Activated T-helper 2 cell treated with anti-CD3 and anti-CD28 coated beads, Interferon-gamma antibody, Interleukin-2, Interleukin-4, amounts not matched to agents 10 μg/mL and 5 μg/mL and 100 μg/mL, durations not matched to agents 14 hours and 24 hours and 36 hours (primary cell): ENCODE measurements at regions of chr11 and their contacts with region 1.

Region 1: GRCh38 chr11:116276051-116277044 is 496.4 kb downstream of the BUD13 start:
- DNase-seq: peak; percentile 69
- H3K4me3 Mint-ChIP-seq: peak overlapping the region; percentile 43
- H3K27ac Mint-ChIP-seq: no peak overlapping the region
- H3K4me1 Mint-ChIP-seq: no peaks in the 10 kb centered on the region
- H3K27me3 Mint-ChIP-seq: no peaks in the 10 kb centered on the region

Region 2: GRCh38 chr11:114738954-114739353 is 1537.4 kb before region 1 on chr11:
- intact Hi-C with region 1: loop called (anchors 5 kb)
- DNase-seq: no peak
- H3K4me3 Mint-ChIP-seq: no peak overlapping the region
- H3K27ac Mint-ChIP-seq: no peak overlapping the region
- H3K4me1 Mint-ChIP-seq: no peaks in the 10 kb centered on the region
- H3K27me3 Mint-ChIP-seq: no peaks in the 10 kb centered on the region

Region 3: GRCh38 chr11:115324581-115325432 is 951.5 kb before region 1 on chr11:
- intact Hi-C with region 1: loop called (anchors 1 kb)
- DNase-seq: no peak
- H3K4me3 Mint-ChIP-seq: no peak overlapping the region
- H3K27ac Mint-ChIP-seq: no peak overlapping the region
- H3K4me1 Mint-ChIP-seq: peaks cover 2% of the 10 kb centered on the region
- H3K27me3 Mint-ChIP-seq: peaks cover 3% of the 10 kb centered on the region

Region 4: GRCh38 chr11:116224154-116224888 is 52.0 kb before region 1 on chr11:
- intact Hi-C with region 1: loop called (anchors 2 kb)
- DNase-seq: no peak
- H3K4me3 Mint-ChIP-seq: no peak overlapping the region
- H3K27ac Mint-ChIP-seq: no peak overlapping the region
- H3K4me1 Mint-ChIP-seq: no peaks in the 10 kb centered on the region
- H3K27me3 Mint-ChIP-seq: no peaks in the 10 kb centered on the region

Region 5: GRCh38 chr11:116379185-116379828 is 103.0 kb after region 1 on chr11:
- intact Hi-C with region 1: no loop called
- DNase-seq: no peak
- H3K4me3 Mint-ChIP-seq: no peak overlapping the region
- H3K27ac Mint-ChIP-seq: no peak overlapping the region
- H3K4me1 Mint-ChIP-seq: no peaks in the 10 kb centered on the region
- H3K27me3 Mint-ChIP-seq: no peaks in the 10 kb centered on the region